Activated T-helper 1 cell treated with anti-CD3 and anti-CD28 coated beads, Interleukin-12 subunit alpha, Interleukin-12 subunit beta, Interleukin-2, Interleukin-4 antibody, amounts not matched to agents 30 ng/mL and 10 ng/mL and 1 ng/mL, durations not matched to agents 14 hours and 24 hours and 36 hours (primary cell): ENCODE measurements at regions of chr3 and their contacts with region 1.

Region 1: DNA sequence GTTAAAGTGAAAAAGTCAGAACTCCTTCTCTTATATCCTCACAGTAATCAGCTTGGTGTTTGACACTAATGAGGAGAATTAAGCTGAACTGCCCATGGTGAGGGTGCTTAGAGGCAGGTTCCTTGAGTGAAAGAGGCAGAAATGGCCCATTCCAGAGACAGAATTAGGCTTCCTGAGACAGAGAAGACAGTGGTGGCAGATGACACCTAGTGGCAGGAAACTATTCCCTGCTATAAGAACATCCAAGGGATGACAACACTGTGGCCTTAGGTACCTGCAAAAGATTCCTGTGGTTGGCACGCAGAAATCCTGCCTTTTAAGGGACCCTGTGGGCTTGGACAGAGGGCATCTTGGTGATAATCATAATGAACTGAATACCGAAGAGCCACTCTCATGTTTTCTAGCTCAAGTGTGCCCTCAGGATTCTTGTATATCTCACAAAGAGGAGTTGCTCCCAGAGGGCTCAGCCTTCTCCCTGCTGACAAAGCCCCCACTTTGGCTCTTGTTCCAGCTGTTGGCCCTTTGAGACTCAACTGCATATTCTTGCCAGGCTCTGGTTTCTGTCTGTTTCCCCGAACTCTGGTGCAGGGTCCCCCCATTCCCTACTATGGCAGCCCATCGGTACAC is 56.0 kb downstream of the KBTBD12 start:
- DNase-seq: no peak
- H3K4me3 Mint-ChIP-seq: no peak overlapping the region
- H3K27ac Mint-ChIP-seq: no peak overlapping the region
- H3K4me1 Mint-ChIP-seq: no peaks in the 10 kb centered on the region
- H3K27me3 Mint-ChIP-seq: peaks cover 38% of the 10 kb centered on the region

Region 2: DNA sequence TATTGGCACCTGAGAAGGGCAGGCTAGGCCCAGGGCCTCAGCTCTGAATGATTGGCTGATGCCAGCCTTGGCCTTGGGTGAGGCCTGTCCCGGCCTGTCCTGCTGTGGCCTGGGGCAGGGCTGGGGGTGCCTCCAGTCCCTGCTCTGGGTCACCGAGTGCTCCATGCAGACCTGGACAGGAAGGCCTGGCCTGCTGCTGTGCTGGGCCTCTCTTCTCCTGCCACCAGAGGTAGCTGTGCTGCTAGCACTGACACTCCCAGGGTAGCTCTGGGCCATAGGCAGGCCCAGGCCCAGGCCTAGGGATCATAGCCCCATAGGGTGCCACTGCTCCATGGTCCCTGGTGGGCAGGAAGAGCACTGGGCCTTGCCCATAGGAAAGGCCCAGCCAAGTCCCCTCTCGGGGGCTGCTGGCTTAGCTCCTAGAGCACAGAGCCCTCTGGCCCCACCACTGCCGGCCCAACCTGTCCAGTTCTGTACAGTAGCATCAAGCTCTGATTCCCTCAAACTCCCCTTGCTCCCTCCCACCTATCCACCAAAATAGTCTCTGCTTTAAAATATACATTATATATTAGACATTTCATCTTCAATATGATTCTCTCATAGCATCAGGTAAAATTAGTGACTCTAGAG is 280.1 kb before region 1 on chr3:
- intact Hi-C with region 1: loop called (anchors 2 kb)
- DNase-seq: no peak
- H3K4me3 Mint-ChIP-seq: no peak overlapping the region
- H3K27ac Mint-ChIP-seq: no peak overlapping the region
- H3K4me1 Mint-ChIP-seq: no peaks in the 10 kb centered on the region
- H3K27me3 Mint-ChIP-seq: no peaks in the 10 kb centered on the region

Region 3: GRCh38 chr3:127886231-127886955 is 84.7 kb before region 1 on chr3:
- intact Hi-C with region 1: no loop called
- DNase-seq: no peak
- H3K4me3 Mint-ChIP-seq: no peak overlapping the region
- H3K27ac Mint-ChIP-seq: no peak overlapping the region
- H3K4me1 Mint-ChIP-seq: peaks cover 6% of the 10 kb centered on the region
- H3K27me3 Mint-ChIP-seq: no peaks in the 10 kb centered on the region

Region 4: GRCh38 chr3:128549283-128550112 is 578.4 kb after region 1 on chr3:
- intact Hi-C with region 1: no loop called
- DNase-seq: no peak
- H3K4me3 Mint-ChIP-seq: no peak overlapping the region
- H3K27ac Mint-ChIP-seq: no peak overlapping the region
- H3K4me1 Mint-ChIP-seq: no peaks in the 10 kb centered on the region
- H3K27me3 Mint-ChIP-seq: peaks cover 33% of the 10 kb centered on the region